Activated naive CD4-positive, alpha-beta T cell treated with anti-CD3 and anti-CD28 coated beads for 36 hours (primary cell): ENCODE measurements at regions of chr6 and their contacts with region 1.

Region 1: DNA sequence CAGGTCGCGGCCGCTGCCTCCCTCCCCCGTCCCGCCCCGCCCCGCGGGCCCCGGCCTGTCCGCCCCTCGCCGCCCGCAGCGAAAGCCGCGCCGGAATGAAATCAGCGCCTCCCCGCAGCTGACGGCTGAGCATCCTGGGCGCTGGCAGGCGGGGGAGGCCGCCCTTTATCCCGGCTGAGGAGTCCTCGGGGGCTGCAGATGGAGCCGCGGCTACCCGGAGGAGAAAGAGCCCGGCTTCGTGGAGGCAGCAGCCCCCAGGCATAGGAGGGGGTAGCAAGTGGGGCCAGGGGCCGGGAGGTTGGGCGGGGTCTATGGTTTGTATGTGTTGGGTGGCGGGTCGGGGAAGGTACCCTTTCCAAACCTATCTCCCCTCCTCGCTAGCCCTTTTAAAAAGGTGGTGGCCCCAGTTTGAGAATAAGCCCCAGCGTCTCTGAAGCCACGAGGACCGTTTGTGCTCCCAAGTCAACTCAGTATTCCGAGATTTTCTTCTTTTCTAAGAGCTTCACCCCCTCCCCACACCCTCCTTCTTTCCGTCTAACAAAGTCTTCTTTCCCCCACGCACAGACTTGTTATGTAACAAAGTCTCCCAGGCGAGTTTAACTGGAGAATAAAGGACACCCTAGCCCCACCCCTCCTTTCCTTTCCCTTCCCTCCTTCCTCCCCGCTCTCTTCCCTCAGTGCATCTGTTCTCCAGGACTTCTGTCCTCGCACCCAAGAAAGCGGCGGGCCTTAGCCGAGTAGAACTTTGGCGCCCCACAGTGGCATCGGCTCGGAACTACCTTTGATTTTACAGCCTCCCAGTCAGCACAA is 11.0 kb downstream of the POU3F2 start:
- DNase-seq: peak; percentile 80
- H3K4me3 Mint-ChIP-seq: peak overlapping the region; percentile 49
- H3K27ac Mint-ChIP-seq: no peak overlapping the region
- H3K4me1 Mint-ChIP-seq: peaks cover 23% of the 10 kb centered on the region
- H3K27me3 Mint-ChIP-seq: peaks cover 76% of the 10 kb centered on the region

Region 2: GRCh38 chr6:97186416-97186999 is 1658.9 kb before region 1 on chr6:
- CTCF ChIA-PET with region 1: no interaction called
- intact Hi-C with region 1: loop called (anchors 10 kb)
- DNase-seq: peak; percentile 81
- H3K4me3 Mint-ChIP-seq: no peak overlapping the region
- H3K27ac Mint-ChIP-seq: no peak overlapping the region
- H3K4me1 Mint-ChIP-seq: no peaks in the 10 kb centered on the region
- H3K27me3 Mint-ChIP-seq: no peaks in the 10 kb centered on the region

Region 3: GRCh38 chr6:97497713-97498331 is 1347.6 kb before region 1 on chr6:
- CTCF ChIA-PET with region 1: no interaction called
- intact Hi-C with region 1: loop called (anchors 1 kb)
- DNase-seq: peak; percentile 75
- H3K4me3 Mint-ChIP-seq: no peak overlapping the region
- H3K27ac Mint-ChIP-seq: no peak overlapping the region
- H3K4me1 Mint-ChIP-seq: no peaks in the 10 kb centered on the region
- H3K27me3 Mint-ChIP-seq: peaks cover 13% of the 10 kb centered on the region

Region 4: GRCh38 chr6:98054453-98054852 is 791.0 kb before region 1 on chr6:
- CTCF ChIA-PET with region 1: no interaction called
- intact Hi-C with region 1: loop called (anchors 10 kb)
- DNase-seq: no peak
- H3K4me3 Mint-ChIP-seq: no peak overlapping the region
- H3K27ac Mint-ChIP-seq: no peak overlapping the region
- H3K4me1 Mint-ChIP-seq: no peaks in the 10 kb centered on the region
- H3K27me3 Mint-ChIP-seq: no peaks in the 10 kb centered on the region

Region 5: DNA sequence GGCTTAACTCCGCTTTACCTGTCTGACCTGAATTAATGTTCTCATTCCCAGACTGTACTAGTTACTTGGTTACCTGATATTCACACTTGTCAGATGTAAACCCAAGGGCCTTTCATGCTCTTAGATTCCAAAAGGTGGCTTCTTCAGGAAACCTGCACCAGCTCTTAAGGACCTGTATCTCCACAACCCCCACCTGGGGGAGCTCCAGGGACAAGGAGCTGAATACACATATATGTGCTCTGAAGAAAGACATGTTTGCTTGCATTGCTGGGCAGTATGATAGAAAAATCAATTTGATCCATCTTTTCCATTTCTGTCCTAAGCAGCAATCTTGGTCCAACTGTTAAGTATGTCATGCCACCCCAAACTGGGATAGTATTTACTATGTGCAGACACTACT is 75.9 kb before region 1 on chr6:
- CTCF ChIA-PET with region 1: interaction called, 4 read pairs
- intact Hi-C with region 1: loop called (anchors 1 kb)
- DNase-seq: peak; percentile 32
- H3K4me3 Mint-ChIP-seq: no peak overlapping the region
- H3K27ac Mint-ChIP-seq: no peak overlapping the region
- H3K4me1 Mint-ChIP-seq: no peaks in the 10 kb centered on the region
- H3K27me3 Mint-ChIP-seq: peaks cover 22% of the 10 kb centered on the region

Region 6: DNA sequence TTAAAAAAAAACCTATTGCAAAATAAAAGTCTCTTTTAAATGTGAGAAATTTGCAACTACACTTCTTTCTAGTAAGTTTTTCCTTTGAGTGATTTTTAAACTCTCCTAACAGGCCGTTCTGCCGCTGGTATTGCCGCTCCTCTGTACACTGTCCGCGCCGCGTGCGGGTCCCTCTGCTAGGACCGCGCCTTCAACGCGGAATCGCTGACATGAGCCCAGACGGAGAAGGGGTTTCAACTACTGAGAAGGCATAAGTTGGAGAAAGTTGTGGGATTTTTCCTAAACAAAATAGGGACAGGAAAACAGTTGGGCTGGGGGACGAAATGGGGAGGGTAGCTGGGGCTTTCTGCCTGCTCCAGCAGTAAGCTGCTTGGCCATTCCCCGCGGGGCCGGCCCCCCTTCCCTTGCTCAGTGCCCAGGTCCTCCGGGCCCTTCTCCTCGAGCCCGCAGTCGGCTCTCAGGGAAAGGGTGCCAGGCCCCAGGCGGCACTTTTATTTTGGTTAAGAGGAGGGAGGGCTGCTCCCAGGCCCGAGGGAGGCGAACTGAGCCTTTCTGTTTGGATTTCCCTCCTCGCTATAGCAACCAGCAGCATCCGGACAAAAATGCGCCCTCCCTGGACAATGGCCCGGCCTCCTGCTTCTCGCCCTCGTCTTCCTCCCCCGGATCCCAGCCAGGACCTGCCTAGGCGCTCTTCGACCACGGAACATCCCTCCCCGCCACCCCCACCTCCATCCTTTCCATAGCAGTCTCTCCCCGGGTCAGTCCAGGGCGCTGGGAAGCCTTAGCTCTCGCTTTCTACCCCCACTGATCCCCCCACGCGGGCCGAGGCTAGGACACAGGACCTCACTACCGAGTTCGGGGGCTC is 17.9 kb before region 1 on chr6:
- CTCF ChIA-PET with region 1: interaction called, 6 read pairs
- intact Hi-C with region 1: loop called (anchors 2 kb)
- DNase-seq: no peak
- H3K4me3 Mint-ChIP-seq: no peak overlapping the region
- H3K27ac Mint-ChIP-seq: no peak overlapping the region
- H3K4me1 Mint-ChIP-seq: peaks cover 43% of the 10 kb centered on the region
- H3K27me3 Mint-ChIP-seq: peaks cover 78% of the 10 kb centered on the region

Region 7: DNA sequence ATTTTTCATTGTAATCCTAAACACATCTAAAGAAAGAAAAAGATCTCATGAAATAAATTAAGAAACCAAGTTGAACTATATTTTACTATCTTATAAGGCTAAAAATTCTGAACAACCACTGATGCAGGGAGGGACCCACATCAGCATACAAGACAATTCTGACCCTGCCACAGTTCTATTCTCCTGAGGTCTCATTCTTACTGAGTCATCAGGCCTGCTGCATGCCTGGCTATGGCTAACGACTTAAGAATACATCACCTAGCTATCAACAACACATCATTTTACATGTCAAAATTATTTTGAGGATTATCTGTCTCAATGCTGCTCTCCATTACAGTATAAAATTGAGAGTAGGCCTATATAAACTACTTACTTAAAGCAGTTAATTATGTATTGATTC is 49.4 kb after region 1 on chr6:
- CTCF ChIA-PET with region 1: no interaction called
- intact Hi-C with region 1: no loop called
- DNase-seq: no peak
- H3K4me3 Mint-ChIP-seq: no peak overlapping the region
- H3K27ac Mint-ChIP-seq: no peak overlapping the region
- H3K4me1 Mint-ChIP-seq: no peaks in the 10 kb centered on the region
- H3K27me3 Mint-ChIP-seq: no peaks in the 10 kb centered on the region

Region 8: GRCh38 chr6:99119109-99120031 is 274.0 kb after region 1 on chr6:
- CTCF ChIA-PET with region 1: interaction called, 6 read pairs
- intact Hi-C with region 1: loop called (anchors 1 kb)
- DNase-seq: peak; percentile 48
- H3K4me3 Mint-ChIP-seq: no peak overlapping the region
- H3K27ac Mint-ChIP-seq: no peak overlapping the region
- H3K4me1 Mint-ChIP-seq: no peaks in the 10 kb centered on the region
- H3K27me3 Mint-ChIP-seq: peaks cover 26% of the 10 kb centered on the region